Activated CD4-positive, alpha-beta memory T cell treated with anti-CD3 and anti-CD28 coated beads for 36 hours (primary cell): ENCODE measurements at regions of chr1 and their contacts with region 1.

Region 1: GRCh38 chr1:45499415-45499769 is 481 bp downstream of the CCDC163 start:
- DNase-seq: peak; percentile 39
- H3K4me3 Mint-ChIP-seq: peak overlapping the region; percentile 95
- H3K27ac Mint-ChIP-seq: peak overlapping the region; percentile 83
- H3K4me1 Mint-ChIP-seq: peaks cover 30% of the 10 kb centered on the region
- H3K27me3 Mint-ChIP-seq: no peaks in the 10 kb centered on the region

Region 2: DNA sequence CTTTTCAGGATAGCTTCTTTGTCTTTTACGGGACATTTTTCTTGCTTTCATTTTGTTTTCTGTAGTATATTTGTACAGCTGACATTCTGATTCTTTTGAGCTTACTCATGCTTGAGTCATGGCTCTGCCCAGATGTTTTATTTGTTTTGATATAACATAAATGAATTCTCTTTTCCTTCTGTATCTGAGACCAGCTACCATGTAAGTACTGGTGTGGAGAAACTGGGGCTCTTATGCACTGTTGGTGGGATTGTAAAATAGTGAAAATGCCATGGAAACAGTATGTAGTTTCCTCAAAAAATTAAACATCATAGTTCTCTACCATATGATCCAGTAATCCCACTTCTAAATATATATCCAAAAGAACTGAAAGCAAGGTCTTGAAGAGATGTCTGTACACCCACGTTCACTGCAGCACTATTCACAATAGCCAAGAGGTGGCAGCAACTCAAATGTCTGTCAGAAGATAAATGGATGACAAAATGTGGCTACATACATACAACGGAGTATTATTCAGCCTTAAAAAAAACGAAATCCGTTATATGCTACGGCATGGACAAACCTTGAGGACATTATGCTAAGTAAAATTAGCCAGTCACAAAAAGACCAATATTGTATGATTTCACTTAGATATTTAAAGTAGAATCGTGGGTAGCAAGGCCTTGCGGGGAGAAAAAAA is 574.4 kb before region 1 on chr1:
- CTCF ChIA-PET with region 1: no interaction called
- POLR2A ChIA-PET with region 1: no interaction called
- intact Hi-C with region 1: no loop called
- DNase-seq: peak; percentile 31
- H3K4me3 Mint-ChIP-seq: no peak overlapping the region
- H3K27ac Mint-ChIP-seq: no peak overlapping the region
- H3K4me1 Mint-ChIP-seq: no peaks in the 10 kb centered on the region
- H3K27me3 Mint-ChIP-seq: no peaks in the 10 kb centered on the region

Region 3: DNA sequence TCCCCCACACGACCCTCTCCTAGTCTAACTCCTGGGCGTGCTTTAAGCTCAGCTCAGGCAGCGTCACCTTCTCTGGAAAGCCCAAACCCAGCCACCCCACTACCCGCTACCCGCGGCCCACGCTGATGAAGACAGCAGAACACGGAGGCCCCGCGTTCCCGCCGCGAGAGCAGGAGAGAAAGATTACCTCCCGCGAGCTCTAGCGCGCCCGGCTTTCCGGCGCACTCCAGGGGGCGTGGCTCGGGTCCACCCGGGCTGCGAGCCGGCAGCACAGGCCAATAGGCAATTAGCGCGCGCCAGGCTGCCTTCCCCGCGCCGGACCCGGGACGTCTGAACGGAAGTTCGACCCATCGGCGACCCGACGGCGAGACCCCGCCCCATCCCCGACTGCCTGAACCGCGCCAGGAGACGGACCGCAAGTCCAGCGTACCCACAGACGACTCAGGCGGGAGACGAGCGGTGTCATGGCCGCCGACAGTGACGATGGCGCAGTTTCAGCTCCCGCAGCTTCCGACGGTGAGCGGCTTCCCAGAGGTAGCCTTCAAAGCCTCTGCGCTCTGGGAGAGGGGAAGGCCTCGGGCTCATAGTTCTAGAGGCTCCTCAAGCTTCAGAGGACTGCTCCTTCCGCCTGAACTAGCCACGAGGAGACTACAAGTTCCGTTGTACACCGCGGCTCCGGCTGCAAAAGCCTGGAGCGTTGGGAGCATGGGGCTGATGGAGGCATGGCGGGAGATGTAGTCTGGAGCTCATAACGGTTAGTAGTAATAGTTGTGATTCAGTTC is 159.4 kb before region 1 on chr1 and contains the starts of genes MUTYH and TOE1:
- CTCF ChIA-PET with region 1: interaction called, 14 read pairs
- POLR2A ChIA-PET with region 1: interaction called, 18 read pairs
- intact Hi-C with region 1: loop called (anchors 1 kb)
- DNase-seq: peak; percentile 97
- H3K4me3 Mint-ChIP-seq: peak within 1 kb of the TSS; percentile 93
- H3K27ac Mint-ChIP-seq: peak within 1 kb of the TSS; percentile 98
- H3K4me1 Mint-ChIP-seq: peaks cover 34% of the 10 kb centered on the region
- H3K27me3 Mint-ChIP-seq: no peaks in the 10 kb centered on the region
- total RNA-seq, gene MUTYH: 49.2 to 51.8 TPM
- total RNA-seq, gene TOE1: 22.8 to 23.1 TPM

Region 4: GRCh38 chr1:45359882-45360513 is 139.4 kb before region 1 on chr1:
- CTCF ChIA-PET with region 1: interaction called, 237 read pairs
- POLR2A ChIA-PET with region 1: interaction called, 3 read pairs
- intact Hi-C with region 1: no loop called
- DNase-seq: peak; percentile 68
- H3K4me3 Mint-ChIP-seq: no peak overlapping the region
- H3K27ac Mint-ChIP-seq: no peak overlapping the region
- H3K4me1 Mint-ChIP-seq: peaks cover 9% of the 10 kb centered on the region
- H3K27me3 Mint-ChIP-seq: no peaks in the 10 kb centered on the region

Region 5: DNA sequence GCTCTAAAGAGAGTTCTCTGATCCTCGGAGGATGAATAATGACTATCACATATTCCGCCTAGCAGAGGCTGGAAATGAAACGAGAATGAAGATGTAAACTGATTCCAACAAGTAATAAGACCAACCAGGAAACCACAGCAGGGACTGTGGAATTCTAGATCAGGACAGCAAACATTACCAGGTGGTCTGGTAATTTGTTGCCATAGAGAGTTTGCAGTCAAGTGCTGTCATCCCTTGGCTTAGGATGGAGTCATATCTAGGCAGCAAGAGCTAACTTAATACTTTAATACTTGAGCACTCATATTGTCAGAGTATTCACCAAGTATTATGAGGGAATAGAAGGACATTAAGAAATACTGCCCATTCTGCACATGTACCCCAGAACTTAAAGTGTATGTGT is 114.1 kb before region 1 on chr1:
- CTCF ChIA-PET with region 1: no interaction called
- POLR2A ChIA-PET with region 1: no interaction called
- intact Hi-C with region 1: no loop called
- DNase-seq: no peak
- H3K4me3 Mint-ChIP-seq: no peak overlapping the region
- H3K27ac Mint-ChIP-seq: no peak overlapping the region
- H3K4me1 Mint-ChIP-seq: no peaks in the 10 kb centered on the region
- H3K27me3 Mint-ChIP-seq: no peaks in the 10 kb centered on the region

Region 6: GRCh38 chr1:45403298-45403697 is 96.1 kb before region 1 on chr1:
- CTCF ChIA-PET with region 1: no interaction called
- POLR2A ChIA-PET with region 1: no interaction called
- intact Hi-C with region 1: no loop called
- DNase-seq: no peak
- H3K4me3 Mint-ChIP-seq: no peak overlapping the region
- H3K27ac Mint-ChIP-seq: no peak overlapping the region
- H3K4me1 Mint-ChIP-seq: no peaks in the 10 kb centered on the region
- H3K27me3 Mint-ChIP-seq: no peaks in the 10 kb centered on the region

Region 7: GRCh38 chr1:45512641-45513054 is 13.3 kb after region 1 on chr1:
- CTCF ChIA-PET with region 1: interaction called, 31 read pairs
- POLR2A ChIA-PET with region 1: interaction called, 3 read pairs
- intact Hi-C with region 1: no loop called
- DNase-seq: peak; percentile 72
- H3K4me3 Mint-ChIP-seq: no peak overlapping the region
- H3K27ac Mint-ChIP-seq: peak overlapping the region; percentile 73
- H3K4me1 Mint-ChIP-seq: peaks cover 20% of the 10 kb centered on the region
- H3K27me3 Mint-ChIP-seq: no peaks in the 10 kb centered on the region

Region 8: GRCh38 chr1:45550401-45551351 is 51.3 kb after region 1 on chr1 and contains the start of gene AKR1A1:
- CTCF ChIA-PET with region 1: interaction called, 6 read pairs
- POLR2A ChIA-PET with region 1: interaction called, 9 read pairs
- intact Hi-C with region 1: loop called (anchors 2 kb)
- DNase-seq: peak; percentile 92
- H3K4me3 Mint-ChIP-seq: peak within 1 kb of the TSS; percentile 94
- H3K27ac Mint-ChIP-seq: peak within 1 kb of the TSS; percentile 91
- H3K4me1 Mint-ChIP-seq: peaks cover 19% of the 10 kb centered on the region
- H3K27me3 Mint-ChIP-seq: no peaks in the 10 kb centered on the region
- total RNA-seq, gene AKR1A1: 184 TPM

Region 9: DNA sequence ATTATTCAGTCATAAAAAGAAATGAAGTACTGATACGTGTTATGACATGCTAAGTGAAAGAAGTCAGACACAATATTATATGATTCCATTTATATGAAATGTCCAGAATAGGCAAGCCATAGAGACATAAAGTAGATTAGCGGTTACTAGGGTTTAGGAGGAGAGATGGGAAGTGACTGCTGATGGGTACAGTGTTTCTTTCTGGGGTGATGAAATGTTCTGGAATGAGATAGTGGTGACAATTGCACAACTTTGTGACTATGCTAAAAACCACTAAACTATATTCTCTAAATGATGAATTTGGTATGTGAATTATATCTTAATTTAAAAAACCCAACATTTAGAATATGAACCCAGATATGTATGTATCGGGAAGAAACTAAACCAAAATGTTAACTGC is 223.4 kb after region 1 on chr1:
- CTCF ChIA-PET with region 1: no interaction called
- POLR2A ChIA-PET with region 1: no interaction called
- intact Hi-C with region 1: no loop called
- DNase-seq: no peak
- H3K4me3 Mint-ChIP-seq: no peak overlapping the region
- H3K27ac Mint-ChIP-seq: no peak overlapping the region
- H3K4me1 Mint-ChIP-seq: no peaks in the 10 kb centered on the region
- H3K27me3 Mint-ChIP-seq: no peaks in the 10 kb centered on the region